ENCODE measurements at regions of chr22 and their contacts with region 1.

Region 1: GRCh38 chr22:20981787-20982562 is at the start of gene LZTR1:
- DNase-seq: peak; percentile 86 to 91
- ATAC-seq: peak; percentile 88 to 95 (median 92)
- H3K4me3 ChIP-seq: peak within 1 kb of the TSS; percentile 85
- H3K27ac ChIP-seq: peak within 1 kb of the TSS; percentile 95
- H3K4me1 ChIP-seq: peaks cover 27% of the 10 kb centered on the region
- H3K27me3 ChIP-seq: no peaks in the 10 kb centered on the region
- CTCF ChIP-seq: peak; percentile 57
- total RNA-seq, gene LZTR1: 23.4 to 37.1 (median 29.8) TPM

Region 2: GRCh38 chr22:20885557-20886323 is 96.2 kb before region 1 on chr22:
- intact Hi-C with region 1: loop called (anchors 10 kb)
- DNase-seq: peak; percentile 82 to 88
- ATAC-seq: peak; percentile 98 to 99 (median 98)
- H3K4me3 ChIP-seq: no peak overlapping the region
- H3K27ac ChIP-seq: peak overlapping the region; percentile 54
- H3K4me1 ChIP-seq: no peaks in the 10 kb centered on the region
- H3K27me3 ChIP-seq: no peaks in the 10 kb centered on the region
- CTCF ChIP-seq: peak; percentile 84

Region 3: GRCh38 chr22:20916983-20917810 is 64.8 kb before region 1 on chr22 and contains the start of gene CRKL:
- intact Hi-C with region 1: loop called in 1 of 2 experiments (anchors 10 kb)
- DNase-seq: peak; percentile 97 to 99
- ATAC-seq: peak; percentile 97 to 99 (median 98)
- H3K4me3 ChIP-seq: peak within 1 kb of the TSS; percentile 100
- H3K27ac ChIP-seq: peak within 1 kb of the TSS; percentile 99
- H3K4me1 ChIP-seq: peaks cover 24% of the 10 kb centered on the region
- H3K27me3 ChIP-seq: no peaks in the 10 kb centered on the region
- CTCF ChIP-seq: peak; percentile 88
- total RNA-seq, gene CRKL: 66.0 to 81.0 (median 73.4) TPM

Region 4: DNA sequence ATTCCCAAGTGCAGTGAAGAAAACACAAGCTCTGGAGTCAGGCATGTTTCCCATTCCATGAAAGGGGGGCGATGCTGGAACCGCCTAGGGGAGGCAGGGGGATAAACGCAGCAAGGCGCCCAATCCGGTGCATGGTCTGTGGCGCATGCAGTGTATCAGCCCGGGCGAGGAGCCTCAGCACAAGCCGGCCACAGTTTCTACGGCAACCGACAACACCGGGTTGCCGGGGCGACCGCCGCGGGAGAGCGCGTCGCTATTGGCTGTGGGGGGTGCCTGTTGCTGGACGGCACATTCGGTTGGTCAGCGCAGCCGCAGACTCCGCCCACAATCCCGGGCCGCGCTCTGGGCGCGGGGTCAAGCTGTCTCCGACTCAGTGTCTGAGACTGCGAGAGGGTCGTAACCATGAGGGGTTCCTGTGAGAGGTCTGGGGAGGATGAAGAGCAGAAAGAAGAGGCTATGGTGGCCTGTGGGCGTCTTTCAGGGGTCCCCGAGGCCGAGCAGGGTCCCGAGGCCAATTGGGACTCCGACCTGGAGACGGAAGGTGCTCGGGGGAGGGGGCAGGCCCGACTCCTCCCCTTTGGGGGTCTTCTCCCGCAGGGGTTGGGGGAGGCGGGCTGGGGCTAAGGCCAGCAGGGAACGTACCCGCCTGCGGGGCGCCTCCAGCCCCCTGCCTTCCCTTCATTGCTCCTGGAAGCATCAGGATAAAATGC is 63.8 kb after region 1 on chr22 and contains the start of gene LRRC74B:
- intact Hi-C with region 1: loop called in 1 of 2 experiments (anchors 2 kb)
- DNase-seq: peak; percentile 92 to 94
- ATAC-seq: peak; percentile 91 to 95 (median 92)
- H3K4me3 ChIP-seq: peak within 1 kb of the TSS; percentile 77
- H3K27ac ChIP-seq: peak within 1 kb of the TSS; percentile 75
- H3K4me1 ChIP-seq: peaks cover 12% of the 10 kb centered on the region
- H3K27me3 ChIP-seq: no peaks in the 10 kb centered on the region
- CTCF ChIP-seq: no peak
- total RNA-seq, gene LRRC74B: 0.22 to 0.30 TPM in 2 of 4 donors, not detected in the others

Measured in psoas muscle (tissue), 8 donors.